Activated naive CD8-positive, alpha-beta T cell treated with anti-CD3 and anti-CD28 coated beads, Interleukin-2, amount 10 ng/mL, durations not matched to agents 7 days and 5 days (primary cell): ENCODE measurements at regions of chr1 and their contacts with region 1.

Region 1: DNA sequence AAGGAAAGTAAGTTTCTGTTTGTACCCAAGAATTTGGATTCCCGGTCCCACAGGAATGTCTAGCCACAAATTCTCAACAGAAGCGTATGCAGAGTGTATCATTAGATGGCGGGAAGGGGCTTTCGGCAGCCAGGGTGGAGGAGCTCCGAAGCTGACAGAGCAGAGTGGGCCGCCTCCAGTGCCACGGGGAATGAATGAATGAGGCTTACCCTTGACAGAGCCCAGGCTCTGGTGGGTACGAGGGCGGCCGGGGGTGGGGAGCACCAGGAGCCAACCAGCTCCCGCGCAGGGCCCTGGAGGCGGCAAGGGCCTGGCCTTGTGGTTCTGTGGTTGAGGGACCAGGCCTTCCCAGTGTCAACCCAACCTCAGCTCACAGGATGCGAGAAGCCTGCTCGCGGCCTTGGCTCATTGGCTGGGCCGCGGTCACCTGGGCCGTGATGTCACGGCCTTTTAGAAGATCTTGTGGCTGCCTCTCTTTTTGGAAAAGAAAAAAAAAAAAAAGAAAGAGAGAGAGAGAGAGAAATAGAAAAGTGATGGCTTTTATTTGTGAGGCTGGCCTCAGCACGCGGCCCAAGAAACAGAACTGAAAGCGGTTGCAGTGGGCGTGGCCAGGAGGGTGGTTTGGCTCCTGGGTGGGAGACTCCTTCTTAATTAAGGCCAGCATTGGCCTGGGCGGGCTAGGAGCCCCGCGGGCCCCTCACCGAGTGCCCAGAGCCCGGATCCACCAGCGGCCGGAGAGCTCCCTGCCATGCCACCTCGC is 34.9 kb upstream of the RUNX3 start:
- DNase-seq: peak; percentile 94
- ATAC-seq: peak; percentile 77
- H3K4me3 Mint-ChIP-seq: peak overlapping the region; percentile 87
- H3K27ac Mint-ChIP-seq: peak overlapping the region; percentile 97
- H3K4me1 Mint-ChIP-seq: peaks cover 58% of the 10 kb centered on the region
- H3K27me3 Mint-ChIP-seq: no peaks in the 10 kb centered on the region

Region 2: DNA sequence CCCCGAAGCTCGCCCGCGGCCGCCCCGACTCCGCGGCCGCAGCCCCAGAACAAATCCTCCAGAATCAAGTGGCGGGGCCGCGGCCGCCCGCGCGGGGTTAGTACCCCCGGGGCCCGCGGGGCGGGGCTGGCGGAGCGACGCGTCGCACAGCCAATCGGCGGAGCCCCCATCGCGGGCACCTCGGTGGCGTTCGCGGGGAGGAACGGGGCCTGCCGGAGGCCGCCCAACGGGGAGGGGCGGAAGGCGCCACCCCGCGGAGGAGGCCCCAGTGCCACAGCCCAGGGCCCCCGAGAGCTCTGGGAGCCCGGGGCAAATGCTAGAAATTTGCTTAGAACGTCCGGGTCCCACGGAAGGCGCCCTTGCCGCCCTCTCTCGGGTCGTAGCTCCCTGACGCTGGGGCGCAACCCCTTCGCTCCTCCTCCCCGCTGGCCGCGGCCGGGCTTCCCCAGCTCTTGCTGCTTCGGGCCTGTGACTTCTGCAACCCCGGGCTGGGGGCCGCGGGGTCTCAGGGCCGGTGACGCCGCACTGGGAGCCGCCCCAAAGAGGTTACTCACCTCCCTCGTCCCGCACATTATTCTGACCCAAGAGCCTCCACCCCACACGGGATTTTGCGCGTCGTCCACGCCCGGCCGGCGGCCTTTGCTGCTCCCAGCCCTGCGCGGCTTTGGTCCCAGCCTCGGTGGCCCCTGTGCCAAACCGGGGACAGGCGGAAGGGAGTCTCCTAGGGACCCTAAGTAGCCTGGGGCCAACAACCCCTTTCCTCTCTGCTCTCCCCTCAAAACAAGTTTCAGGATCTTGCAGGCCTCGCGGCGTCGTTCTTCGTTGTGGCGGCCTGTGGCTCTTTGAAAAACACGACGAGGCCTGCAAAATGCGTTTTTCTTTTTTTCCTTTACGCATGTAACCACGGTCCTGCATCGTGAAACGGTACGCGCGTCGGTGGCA is 34.5 kb before region 1 on chr1 and contains the start of gene RUNX3:
- POLR2A ChIA-PET with region 1: interaction called, 64 read pairs
- DNase-seq: peak; percentile 95
- ATAC-seq: peak; percentile 78
- H3K4me3 Mint-ChIP-seq: peak within 1 kb of the TSS; percentile 92
- H3K27ac Mint-ChIP-seq: peak within 1 kb of the TSS; percentile 91
- H3K4me1 Mint-ChIP-seq: peaks cover 60% of the 10 kb centered on the region
- H3K27me3 Mint-ChIP-seq: no peaks in the 10 kb centered on the region
- total RNA-seq, gene RUNX3: 172 TPM

Region 3: GRCh38 chr1:24978383-24979032 is 13.5 kb after region 1 on chr1:
- POLR2A ChIA-PET with region 1: interaction called, 89 read pairs
- DNase-seq: peak; percentile 27
- ATAC-seq: no peak
- H3K4me3 Mint-ChIP-seq: peak overlapping the region; percentile 38
- H3K27ac Mint-ChIP-seq: peak overlapping the region; percentile 91
- H3K4me1 Mint-ChIP-seq: peaks cover 73% of the 10 kb centered on the region
- H3K27me3 Mint-ChIP-seq: no peaks in the 10 kb centered on the region

Region 4: DNA sequence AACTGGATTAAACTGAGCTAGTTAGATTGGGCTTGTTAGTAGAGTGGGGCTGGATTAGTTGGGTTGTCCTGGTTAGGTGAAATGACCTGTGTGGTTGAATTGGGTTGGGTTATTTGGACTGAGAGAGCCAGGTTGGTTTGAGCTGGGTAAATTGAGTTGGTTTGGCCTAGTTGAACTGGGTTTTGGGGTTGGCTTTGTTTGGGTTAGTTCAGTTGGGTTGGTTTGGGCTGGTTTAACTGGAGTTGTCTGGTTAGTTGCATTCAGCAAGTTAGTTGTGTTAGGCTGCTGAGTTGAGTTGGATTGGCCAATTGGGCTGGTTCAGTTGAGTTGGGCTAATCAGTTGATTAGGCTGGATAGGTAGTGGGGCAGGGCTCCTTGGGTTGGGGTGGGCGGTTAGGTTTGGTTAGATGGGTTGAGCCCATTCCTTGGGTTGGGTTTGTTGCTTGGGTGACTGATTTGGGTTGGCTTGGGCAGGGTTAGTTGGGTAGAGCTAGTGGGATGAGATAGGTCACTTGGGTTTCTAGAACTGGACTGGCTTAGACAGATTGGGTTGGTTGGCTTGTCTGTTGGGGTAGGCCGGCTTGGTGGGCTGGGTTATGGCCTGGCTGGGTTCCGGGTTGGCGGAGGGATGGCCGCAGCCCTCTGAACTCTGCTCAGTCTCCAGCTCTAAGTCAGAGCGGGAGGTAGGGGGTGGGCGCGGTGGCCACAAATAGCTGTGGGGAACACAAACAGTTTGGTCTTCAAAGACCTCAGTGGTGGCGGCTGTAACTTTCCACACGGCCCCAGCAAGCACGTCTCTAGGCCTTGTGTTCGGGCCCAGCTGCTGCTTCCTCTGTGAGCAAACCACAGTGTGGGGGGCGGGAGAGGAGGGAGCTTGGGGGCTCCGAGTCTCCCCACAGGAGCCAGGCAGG is 32.2 kb after region 1 on chr1:
- POLR2A ChIA-PET with region 1: interaction called, 266 read pairs
- DNase-seq: peak; percentile 85
- ATAC-seq: peak; percentile 77
- H3K4me3 Mint-ChIP-seq: peak overlapping the region; percentile 73
- H3K27ac Mint-ChIP-seq: peak overlapping the region; percentile 98
- H3K4me1 Mint-ChIP-seq: peaks cover 85% of the 10 kb centered on the region
- H3K27me3 Mint-ChIP-seq: no peaks in the 10 kb centered on the region

Region 5: GRCh38 chr1:25037174-25038074 is 72.4 kb after region 1 on chr1:
- POLR2A ChIA-PET with region 1: interaction called, 154 read pairs
- DNase-seq: peak; percentile 78
- ATAC-seq: no peak
- H3K4me3 Mint-ChIP-seq: peak overlapping the region; percentile 22
- H3K27ac Mint-ChIP-seq: peak overlapping the region; percentile 57
- H3K4me1 Mint-ChIP-seq: peaks cover 48% of the 10 kb centered on the region
- H3K27me3 Mint-ChIP-seq: no peaks in the 10 kb centered on the region

Region 6: GRCh38 chr1:25099343-25099951 is 134.5 kb after region 1 on chr1:
- POLR2A ChIA-PET with region 1: interaction called, 50 read pairs
- DNase-seq: peak; percentile 67
- ATAC-seq: peak; percentile 57
- H3K4me3 Mint-ChIP-seq: peak overlapping the region; percentile 73
- H3K27ac Mint-ChIP-seq: peak overlapping the region; percentile 87
- H3K4me1 Mint-ChIP-seq: peaks cover 76% of the 10 kb centered on the region
- H3K27me3 Mint-ChIP-seq: no peaks in the 10 kb centered on the region